ENCODE measurements at regions of chr1 and their contacts with region 1.

Region 1: GRCh38 chr1:205658943-205659581 is 21.2 kb downstream of the SLC45A3 start:
- DNase-seq: peak; percentile 84
- H3K4me3 Mint-ChIP-seq: no peak overlapping the region
- H3K27ac Mint-ChIP-seq: no peak overlapping the region
- H3K4me1 Mint-ChIP-seq: peaks cover 2% of the 10 kb centered on the region
- H3K27me3 Mint-ChIP-seq: peaks cover 3% of the 10 kb centered on the region

Region 2: GRCh38 chr1:205528887-205529825 is 129.9 kb before region 1 on chr1:
- CTCF ChIA-PET with region 1: interaction called, 169 read pairs
- intact Hi-C with region 1: loop called (anchors 1 kb)
- DNase-seq: peak; percentile 87
- H3K4me3 Mint-ChIP-seq: peak overlapping the region; percentile 36
- H3K27ac Mint-ChIP-seq: no peak overlapping the region
- H3K4me1 Mint-ChIP-seq: no peaks in the 10 kb centered on the region
- H3K27me3 Mint-ChIP-seq: no peaks in the 10 kb centered on the region

Region 3: DNA sequence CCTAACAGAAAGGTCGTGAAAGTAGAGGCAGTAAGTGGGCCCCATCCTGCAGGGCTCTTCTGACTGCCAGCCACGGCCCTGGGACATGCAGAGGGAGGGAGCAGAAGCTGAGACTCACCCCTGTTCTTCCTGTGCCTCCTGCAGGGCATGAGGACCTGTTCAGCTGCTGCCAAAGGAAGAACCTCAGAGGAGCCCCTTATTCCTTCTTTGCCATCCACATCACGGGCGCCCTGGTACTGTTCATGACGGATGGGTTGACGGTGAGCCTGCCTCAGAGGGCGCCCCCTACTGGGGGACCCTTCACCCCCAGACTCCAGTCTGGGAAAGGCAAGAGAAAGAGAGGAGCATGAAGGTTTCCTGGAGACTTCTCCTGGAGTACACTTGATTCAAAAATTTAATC is 74.3 kb before region 1 on chr1:
- CTCF ChIA-PET with region 1: interaction called, 390 read pairs
- intact Hi-C with region 1: no loop called
- DNase-seq: peak; percentile 8
- H3K4me3 Mint-ChIP-seq: no peak overlapping the region
- H3K27ac Mint-ChIP-seq: no peak overlapping the region
- H3K4me1 Mint-ChIP-seq: peaks cover 6% of the 10 kb centered on the region
- H3K27me3 Mint-ChIP-seq: no peaks in the 10 kb centered on the region

Region 4: GRCh38 chr1:205631727-205632373 is 27.2 kb before region 1 on chr1 and contains the start of gene ELK4:
- CTCF ChIA-PET with region 1: interaction called, 36 read pairs
- intact Hi-C with region 1: loop called (anchors 1 kb)
- DNase-seq: peak; percentile 100
- H3K4me3 Mint-ChIP-seq: peak within 1 kb of the TSS; percentile 81
- H3K27ac Mint-ChIP-seq: peak within 1 kb of the TSS; percentile 92
- H3K4me1 Mint-ChIP-seq: peaks cover 37% of the 10 kb centered on the region
- H3K27me3 Mint-ChIP-seq: no peaks in the 10 kb centered on the region
- total RNA-seq, gene ELK4: 60.5 to 62.4 TPM

Region 5: DNA sequence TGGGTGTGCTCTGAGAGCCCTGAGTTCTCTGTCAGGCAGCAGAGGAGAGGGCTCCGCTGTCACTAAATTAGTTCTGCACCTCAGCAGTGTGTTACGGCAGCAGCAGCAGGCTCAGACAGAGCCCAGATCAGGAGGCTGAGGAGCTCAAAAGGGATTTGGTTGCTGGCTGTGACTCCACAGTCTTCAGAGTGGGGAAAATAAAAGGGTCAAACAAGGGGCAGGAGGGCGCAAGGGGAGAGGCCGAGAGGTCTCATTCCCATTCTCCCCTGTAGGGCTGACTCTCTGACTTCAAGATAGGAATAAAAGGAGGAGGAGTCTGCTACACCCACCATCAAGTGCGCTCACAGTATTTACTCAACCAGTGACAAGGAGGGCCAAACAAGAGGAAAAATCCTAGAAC is 30.4 kb after region 1 on chr1:
- CTCF ChIA-PET with region 1: interaction called, 18 read pairs
- intact Hi-C with region 1: no loop called
- DNase-seq: no peak
- H3K4me3 Mint-ChIP-seq: no peak overlapping the region
- H3K27ac Mint-ChIP-seq: no peak overlapping the region
- H3K4me1 Mint-ChIP-seq: no peaks in the 10 kb centered on the region
- H3K27me3 Mint-ChIP-seq: peaks cover 13% of the 10 kb centered on the region

Region 6: DNA sequence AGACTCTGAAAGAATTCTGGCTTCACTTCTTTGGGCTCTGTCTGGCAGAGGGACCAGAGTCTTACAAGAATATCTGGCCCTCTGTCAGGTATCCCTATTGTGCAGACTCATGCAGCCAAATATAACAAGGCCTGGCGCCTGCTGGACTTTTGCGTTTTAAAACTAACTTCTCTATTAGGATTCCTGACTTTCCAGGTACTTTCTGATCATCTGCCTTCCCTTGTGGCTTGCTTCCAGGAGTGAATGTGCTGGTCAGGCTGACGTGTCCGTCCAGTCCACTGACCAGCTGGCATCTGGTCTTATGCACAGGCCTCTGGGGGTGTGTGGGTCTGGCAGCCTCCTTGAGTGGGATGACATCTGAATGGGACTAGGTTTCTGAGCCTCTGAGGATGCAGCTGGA is 124.8 kb after region 1 on chr1:
- CTCF ChIA-PET with region 1: interaction called, 40 read pairs
- intact Hi-C with region 1: loop called (anchors 1 kb)
- DNase-seq: no peak
- H3K4me3 Mint-ChIP-seq: no peak overlapping the region
- H3K27ac Mint-ChIP-seq: no peak overlapping the region
- H3K4me1 Mint-ChIP-seq: peaks cover 9% of the 10 kb centered on the region
- H3K27me3 Mint-ChIP-seq: no peaks in the 10 kb centered on the region

Region 7: DNA sequence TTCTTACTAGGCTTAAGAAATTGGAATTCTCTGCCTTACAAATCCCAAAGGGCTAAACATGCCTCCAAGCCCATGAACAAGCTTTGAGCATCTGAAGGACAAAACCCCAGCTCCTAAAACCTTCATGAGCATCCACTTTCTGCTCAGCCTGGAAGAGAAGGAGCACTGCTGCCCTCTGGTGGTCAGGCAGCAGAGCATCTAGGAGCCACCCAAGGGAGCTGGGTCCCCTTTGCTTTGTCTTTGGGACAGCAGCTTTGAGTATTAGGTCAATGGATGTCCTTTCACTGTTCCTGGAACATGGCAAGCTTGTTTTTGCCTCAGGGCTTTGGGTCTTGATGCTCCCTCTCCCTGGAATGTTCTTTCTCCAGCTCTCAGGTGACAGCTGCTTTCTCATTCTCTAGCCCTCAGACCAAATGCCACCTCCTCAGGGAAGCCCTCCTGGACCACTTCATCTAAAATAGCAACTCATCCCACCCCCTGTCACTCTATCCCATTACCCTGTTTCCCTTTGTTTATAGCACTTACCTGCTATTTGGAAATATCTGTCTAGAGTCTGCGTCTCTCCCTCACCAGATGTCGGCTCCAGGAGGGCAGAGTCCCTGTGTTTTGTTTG is 318.4 kb after region 1 on chr1:
- CTCF ChIA-PET with region 1: interaction called, 115 read pairs
- intact Hi-C with region 1: loop called (anchors 1 kb)
- DNase-seq: peak; percentile 88
- H3K4me3 Mint-ChIP-seq: no peak overlapping the region
- H3K27ac Mint-ChIP-seq: no peak overlapping the region
- H3K4me1 Mint-ChIP-seq: no peaks in the 10 kb centered on the region
- H3K27me3 Mint-ChIP-seq: no peaks in the 10 kb centered on the region

Measured in activated naive CD4-positive, alpha-beta T cell treated with anti-CD3 and anti-CD28 coated beads for 36 hours (primary cell).